A673 (cell line): ENCODE measurements at regions of chr3 and their contacts with region 1.

Region 1: DNA sequence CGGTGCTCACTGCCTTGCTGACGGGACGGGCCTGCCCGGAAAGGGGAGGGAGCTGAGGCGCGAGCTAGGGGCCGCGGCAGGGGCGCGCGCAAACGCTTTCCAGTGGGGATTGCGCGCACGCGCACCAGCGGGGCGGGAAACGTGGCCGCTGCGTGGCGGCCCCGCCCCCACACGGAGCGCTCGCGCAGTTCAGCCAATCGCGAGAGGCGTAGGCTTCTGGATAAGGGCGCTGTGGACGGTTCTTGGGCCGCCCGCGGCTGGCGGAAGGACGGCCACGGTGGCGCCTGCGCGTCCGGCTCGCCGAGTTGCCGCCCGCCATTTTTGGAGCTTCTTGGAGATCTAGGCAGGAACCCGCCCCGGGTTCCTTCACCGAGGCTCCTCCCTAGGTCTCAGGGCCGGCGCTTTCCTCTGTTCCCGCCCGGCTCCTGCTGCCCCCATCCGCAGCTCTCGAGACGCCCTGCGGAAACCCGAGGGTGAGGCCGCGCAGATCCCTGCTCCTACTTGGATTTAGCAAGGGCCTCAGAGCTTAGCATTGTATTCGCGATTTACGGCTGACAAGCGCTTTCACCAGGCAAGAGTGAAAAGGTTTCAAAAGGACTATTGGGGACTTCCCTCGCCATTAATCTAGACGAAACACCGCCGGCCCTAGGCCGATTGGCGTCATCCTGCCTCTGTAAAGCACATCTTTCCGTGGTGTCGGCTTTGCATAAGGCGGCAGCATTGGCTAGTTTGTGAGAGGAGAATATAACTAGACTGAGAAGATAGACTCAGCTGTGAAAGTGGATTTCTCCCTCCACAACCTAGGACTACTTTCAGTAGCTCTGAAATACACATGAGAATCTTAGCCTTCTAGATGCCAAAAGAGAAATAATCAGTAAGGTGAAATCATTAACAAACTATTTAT is 496 bp upstream of the STAG1 start:
- DNase-seq: peak; percentile 99
- H3K4me3 ChIP-seq: peak overlapping the region; percentile 65
- H3K27ac ChIP-seq: peak overlapping the region; percentile 98
- H3K4me1 ChIP-seq: peaks cover 33% of the 10 kb centered on the region
- H3K27me3 ChIP-seq: no peaks in the 10 kb centered on the region
- CTCF ChIP-seq: no peak; the same call in 1 of the 2 replicates

Region 2: DNA sequence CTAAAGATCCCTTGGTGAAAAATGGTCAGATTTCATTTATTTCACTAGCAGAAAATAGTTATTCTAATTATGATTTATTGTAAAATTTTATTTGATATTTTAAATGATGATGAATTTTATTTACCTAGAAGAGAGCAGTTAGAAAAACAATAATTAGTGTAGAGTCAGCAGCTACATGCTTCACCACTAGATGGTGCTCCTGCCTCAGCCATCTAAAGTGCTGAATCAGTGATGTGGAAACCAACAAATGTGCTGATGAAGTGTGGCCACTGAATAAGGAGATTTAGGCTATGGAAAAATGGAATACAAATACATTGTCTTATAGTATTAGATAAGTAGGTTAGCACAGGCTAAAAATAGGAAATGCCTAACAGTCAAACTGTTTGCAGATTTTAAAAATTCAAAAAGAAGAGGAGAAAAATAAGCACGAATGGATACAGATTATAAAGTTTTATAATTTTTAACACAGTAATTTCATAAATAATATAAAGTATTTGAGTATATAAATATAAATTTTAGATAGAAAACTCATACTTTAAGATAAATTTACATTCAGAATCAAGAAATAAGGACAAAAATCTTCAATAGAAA is 677.4 kb before region 1 on chr3:
- CTCF ChIA-PET with region 1: interaction called, 14 read pairs
- POLR2A ChIA-PET with region 1: interaction called, 3 read pairs
- intact Hi-C with region 1: loop called (anchors 1 kb)
- DNase-seq: peak; percentile 83
- H3K4me3 ChIP-seq: no peak overlapping the region
- H3K27ac ChIP-seq: no peak overlapping the region
- H3K4me1 ChIP-seq: peaks cover 11% of the 10 kb centered on the region
- H3K27me3 ChIP-seq: no peaks in the 10 kb centered on the region
- CTCF ChIP-seq: peak; percentile 95

Region 3: DNA sequence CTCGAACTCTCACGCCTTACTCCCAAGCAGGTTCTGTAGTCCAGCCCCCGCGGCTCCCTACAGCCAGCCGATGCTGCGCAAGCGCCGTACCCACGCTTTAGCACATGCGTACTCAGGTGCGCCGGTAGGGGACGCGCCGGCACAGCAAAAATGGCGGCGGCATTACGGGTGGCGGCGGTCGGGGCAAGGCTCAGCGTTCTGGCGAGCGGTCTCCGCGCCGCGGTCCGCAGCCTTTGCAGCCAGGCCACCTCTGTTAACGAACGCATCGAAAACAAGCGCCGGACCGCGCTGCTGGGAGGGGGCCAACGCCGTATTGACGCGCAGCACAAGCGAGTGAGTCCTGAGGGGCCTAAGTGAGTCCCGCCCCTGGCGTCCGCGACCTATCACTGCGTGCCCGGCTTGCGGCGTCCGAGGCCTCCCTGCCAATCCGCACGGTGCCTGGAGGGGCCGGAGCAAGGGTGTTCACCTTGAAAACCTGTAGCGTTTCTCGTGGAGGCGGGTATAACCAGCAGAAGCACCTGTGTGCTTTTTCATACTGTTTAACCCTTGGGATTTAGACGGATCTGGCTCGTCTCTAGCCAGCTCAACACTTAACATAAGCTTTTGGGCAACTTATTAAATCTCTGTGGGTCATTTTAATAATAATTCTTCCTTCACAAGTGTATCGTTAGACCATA is 502.3 kb before region 1 on chr3 and contains the start of gene PCCB:
- CTCF ChIA-PET with region 1: no interaction called
- POLR2A ChIA-PET with region 1: no interaction called
- intact Hi-C with region 1: loop called (anchors 1 kb)
- DNase-seq: peak; percentile 95
- H3K4me3 ChIP-seq: peak within 1 kb of the TSS; percentile 57
- H3K27ac ChIP-seq: peak within 1 kb of the TSS; percentile 86
- H3K4me1 ChIP-seq: peaks cover 5% of the 10 kb centered on the region
- H3K27me3 ChIP-seq: no peaks in the 10 kb centered on the region
- CTCF ChIP-seq: peak; percentile 77
- total RNA-seq, gene PCCB: 82.1 and 94.6 TPM in 2 replicates

Region 4: GRCh38 chr3:136545664-136546268 is 206.9 kb before region 1 on chr3:
- CTCF ChIA-PET with region 1: interaction called, 28 read pairs
- POLR2A ChIA-PET with region 1: no interaction called
- intact Hi-C with region 1: loop called (anchors 1 kb)
- DNase-seq: peak; percentile 41
- H3K4me3 ChIP-seq: no peak overlapping the region
- H3K27ac ChIP-seq: peak overlapping the region; percentile 27
- H3K4me1 ChIP-seq: peaks cover 51% of the 10 kb centered on the region
- H3K27me3 ChIP-seq: no peaks in the 10 kb centered on the region
- CTCF ChIP-seq: peak; percentile 53

Region 5: GRCh38 chr3:136802481-136802996 is 49.9 kb after region 1 on chr3:
- CTCF ChIA-PET with region 1: interaction called, 9 read pairs
- POLR2A ChIA-PET with region 1: no interaction called
- intact Hi-C with region 1: loop called (anchors 2 kb)
- DNase-seq: peak; percentile 98
- H3K4me3 ChIP-seq: no peak overlapping the region
- H3K27ac ChIP-seq: peak overlapping the region; percentile 71
- H3K4me1 ChIP-seq: peaks cover 33% of the 10 kb centered on the region
- H3K27me3 ChIP-seq: no peaks in the 10 kb centered on the region
- CTCF ChIP-seq: no peak

Region 6: DNA sequence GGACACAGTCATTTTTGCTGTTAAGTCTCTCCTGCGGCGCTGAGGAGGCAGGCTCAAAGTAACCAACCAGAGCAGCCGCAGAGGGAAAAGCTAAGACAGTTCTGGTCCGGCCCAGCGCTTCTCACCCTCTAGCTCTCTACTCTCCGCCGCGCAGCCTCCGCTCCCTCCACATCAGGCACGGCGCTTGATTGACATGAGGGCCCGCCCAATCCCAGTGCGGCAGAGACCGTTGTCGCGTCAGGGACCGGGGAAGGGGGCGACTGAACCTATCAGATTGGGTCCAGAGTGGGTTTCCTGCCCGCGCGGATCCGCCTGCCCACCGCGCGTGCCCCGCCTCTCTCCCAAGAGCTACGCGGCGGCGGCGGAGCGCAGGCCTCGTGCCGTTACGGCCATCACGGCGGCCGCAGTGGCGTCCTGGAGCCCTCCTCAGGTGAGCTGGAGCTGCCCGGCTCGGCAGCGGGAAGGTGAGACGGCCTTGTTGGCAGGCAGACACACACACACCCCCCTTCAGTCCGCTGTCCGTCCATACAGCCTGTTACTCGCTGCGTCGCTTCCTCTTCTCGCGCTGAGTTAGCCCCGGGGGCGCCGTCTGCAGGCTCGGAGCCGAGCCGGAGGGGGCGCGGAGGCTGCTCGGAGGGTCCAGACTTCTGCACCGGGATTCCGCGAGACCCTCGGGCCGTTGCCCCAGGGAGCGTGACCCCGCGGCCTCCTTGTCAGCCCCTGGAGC is 109.4 kb after region 1 on chr3 and contains the start of gene NCK1:
- CTCF ChIA-PET with region 1: interaction called, 3 read pairs
- POLR2A ChIA-PET with region 1: interaction called, 3 read pairs
- intact Hi-C with region 1: loop called (anchors 2 kb)
- DNase-seq: peak; percentile 99
- H3K4me3 ChIP-seq: peak within 1 kb of the TSS; percentile 84
- H3K27ac ChIP-seq: peak within 1 kb of the TSS; percentile 92
- H3K4me1 ChIP-seq: peaks cover 3% of the 10 kb centered on the region
- H3K27me3 ChIP-seq: no peaks in the 10 kb centered on the region
- CTCF ChIP-seq: peak; percentile 45
- total RNA-seq, gene NCK1: 43.7 and 50.2 TPM in 2 replicates

Region 7: GRCh38 chr3:137013955-137014688 is 261.4 kb after region 1 on chr3:
- CTCF ChIA-PET with region 1: interaction called, 38 read pairs
- POLR2A ChIA-PET with region 1: no interaction called
- intact Hi-C with region 1: loop called (anchors 2 kb)
- DNase-seq: peak; percentile 93
- H3K4me3 ChIP-seq: peak overlapping the region; percentile 46
- H3K27ac ChIP-seq: peak overlapping the region; percentile 1
- H3K4me1 ChIP-seq: peaks cover 10% of the 10 kb centered on the region
- H3K27me3 ChIP-seq: no peaks in the 10 kb centered on the region
- CTCF ChIP-seq: peak; percentile 87

Region 8: DNA sequence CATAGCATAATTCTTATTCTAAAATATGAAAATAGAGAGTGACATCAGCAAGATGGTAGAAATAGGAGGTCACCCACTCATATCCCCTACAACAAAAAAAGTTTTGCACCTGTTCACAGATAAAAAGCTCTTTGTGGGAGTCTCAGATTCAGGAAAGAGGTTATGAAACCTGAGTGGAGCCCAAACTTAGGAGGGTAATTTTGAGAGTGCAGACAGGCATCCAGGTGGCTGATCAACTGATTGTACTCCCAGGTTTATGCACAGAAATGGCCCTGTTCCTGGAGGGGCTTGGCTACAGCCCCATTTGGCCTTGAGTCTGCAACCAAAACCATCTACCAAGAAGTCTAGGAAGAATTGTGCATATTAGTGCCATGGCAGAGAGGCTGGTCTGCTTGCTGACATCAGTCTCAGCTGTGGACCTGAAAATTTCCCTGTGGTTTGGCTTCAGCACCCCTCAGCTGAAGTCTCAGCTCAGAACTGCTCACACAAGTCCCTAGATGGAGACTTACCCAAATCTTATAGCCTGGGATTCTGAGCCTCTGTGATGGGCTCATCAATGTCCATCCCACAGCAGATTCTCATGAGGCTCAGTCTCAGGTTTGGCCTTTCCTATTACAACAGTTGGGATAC is 496.8 kb after region 1 on chr3:
- CTCF ChIA-PET with region 1: no interaction called
- POLR2A ChIA-PET with region 1: no interaction called
- intact Hi-C with region 1: no loop called
- DNase-seq: no peak
- H3K4me3 ChIP-seq: no peak overlapping the region
- H3K27ac ChIP-seq: no peak overlapping the region
- H3K4me1 ChIP-seq: no peaks in the 10 kb centered on the region
- H3K27me3 ChIP-seq: peaks cover 11% of the 10 kb centered on the region
- CTCF ChIP-seq: no peak